K562 (cell line): ENCODE measurements at regions of chr1 and their contacts with region 1.

Region 1: DNA sequence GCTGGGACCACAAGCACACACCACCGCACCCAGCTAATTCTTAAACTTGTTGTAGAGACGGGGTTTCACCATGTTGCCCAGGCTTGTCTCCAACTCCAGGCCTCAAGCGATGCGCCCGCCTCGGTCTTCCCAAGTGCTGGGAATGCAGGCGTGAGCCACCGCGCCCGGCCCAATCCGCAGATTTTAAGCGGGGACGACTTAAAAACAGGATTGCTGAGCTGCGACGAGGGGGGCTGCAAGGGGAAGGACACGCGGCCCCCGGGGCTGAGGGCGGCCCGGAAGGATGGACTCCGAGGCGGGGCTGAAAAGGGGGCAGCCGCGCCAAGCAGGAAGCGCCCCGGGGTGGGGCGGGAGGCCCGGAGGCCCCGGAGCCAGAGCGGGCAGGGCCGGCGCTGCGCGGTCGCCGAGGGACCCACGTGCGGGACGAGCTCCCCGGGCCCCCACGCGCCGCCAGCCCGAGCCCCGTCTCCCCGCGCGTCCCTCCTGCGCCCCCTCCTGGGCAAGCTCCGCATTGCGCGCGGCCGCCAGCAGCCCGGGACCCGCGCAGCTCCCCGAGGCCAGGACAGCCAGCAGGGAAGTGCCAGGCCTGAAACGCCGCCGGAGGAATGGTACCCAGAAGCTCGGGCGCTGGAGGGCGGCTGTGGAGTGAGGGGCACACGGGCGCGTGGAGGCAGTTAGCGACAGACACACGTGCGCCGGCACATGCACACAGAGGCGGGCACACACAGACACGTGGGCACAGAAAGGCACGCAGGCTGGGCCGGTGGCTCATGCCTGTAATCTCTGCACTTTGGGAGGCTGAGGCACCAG is 5.5 kb upstream of the PRKCZ start:
- DNase-seq: peak; percentile 72 to 94 (median 90)
- ATAC-seq: peak; percentile 84
- H3K4me3 ChIP-seq: no peak overlapping the region
- H3K27ac ChIP-seq: no peak overlapping the region
- H3K4me1 ChIP-seq: peaks cover 0 to 49% of the 10 kb centered on the region in 2 experiments; a peak in 2 of 5 replicates
- H3K27me3 ChIP-seq: peaks cover 33 to 73% of the 10 kb centered on the region in 2 experiments; a peak in 4 of 5 replicates
- CTCF ChIP-seq: peak; percentile 71 to 94 (median 82)
- EP300 ChIP-seq: no peak
- POLR2A ChIP-seq: no peak
- RAD21 ChIP-seq: peak; percentile 65 to 86; a peak in 3 of 4 replicates

Region 2: DNA sequence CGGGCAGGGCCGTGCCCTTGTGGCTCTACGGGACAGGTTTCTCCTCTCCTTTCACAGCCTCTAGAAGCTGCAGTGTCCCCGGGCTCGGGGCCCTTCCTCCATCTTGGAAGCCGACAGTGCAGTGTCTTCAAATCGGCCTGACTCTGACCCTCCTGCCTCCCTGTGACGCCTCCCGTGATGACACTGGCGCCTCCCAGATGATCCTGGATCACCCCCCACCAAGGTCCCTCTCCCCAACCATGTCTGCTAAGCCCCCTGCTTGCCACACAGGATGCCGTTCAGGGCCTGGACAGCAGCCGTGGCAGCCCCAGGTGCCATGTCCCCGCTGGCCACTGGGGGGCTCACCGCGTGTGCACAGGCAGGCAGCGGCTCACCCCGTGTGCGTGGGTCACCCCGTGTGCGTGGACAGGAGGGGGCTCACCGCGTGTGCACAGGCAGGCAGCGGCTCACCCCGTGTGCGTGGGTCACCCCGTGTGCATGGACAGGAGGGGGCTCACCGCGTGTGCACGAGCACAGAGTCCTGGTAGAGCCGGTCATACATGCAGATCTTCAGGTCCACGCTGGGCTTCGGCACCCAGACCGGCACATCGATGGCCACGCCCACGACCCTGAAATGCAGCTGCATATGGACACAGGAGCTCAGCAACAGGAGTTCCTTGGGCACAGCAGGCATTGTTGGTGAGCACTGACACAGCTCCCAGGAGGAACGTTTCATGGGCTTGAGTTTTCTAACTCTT is 100.7 kb before region 1 on chr1:
- CTCF ChIA-PET with region 1: interaction called, 18 read pairs
- POLR2A ChIA-PET with region 1: interaction called, 3 read pairs
- in situ Hi-C with region 1: no loop called
- intact Hi-C with region 1: loop called (anchors 1 kb)
- DNase-seq: peak; percentile 74 to 84 (median 81)
- ATAC-seq: peak; percentile 99
- H3K4me3 ChIP-seq: no peak overlapping the region
- H3K27ac ChIP-seq: no peak overlapping the region
- H3K4me1 ChIP-seq: peaks cover 0 to 41% of the 10 kb centered on the region in 2 experiments; a peak in 2 of 5 replicates
- H3K27me3 ChIP-seq: peaks cover 58 to 90% of the 10 kb centered on the region in 2 experiments
- CTCF ChIP-seq: peak; percentile 77 to 97 (median 85)
- EP300 ChIP-seq: no peak
- POLR2A ChIP-seq: no peak
- RAD21 ChIP-seq: peak; percentile 48 to 73

Region 3: GRCh38 chr1:2163205-2163604 is 118.5 kb after region 1 on chr1:
- CTCF ChIA-PET with region 1: no interaction called
- POLR2A ChIA-PET with region 1: no interaction called
- in situ Hi-C with region 1: no loop called
- intact Hi-C with region 1: no loop called
- DNase-seq: no peak
- ATAC-seq: peak; percentile 27; the same call in 1 of the 3 replicates
- H3K4me3 ChIP-seq: no peak overlapping the region
- H3K27ac ChIP-seq: no peak overlapping the region
- H3K4me1 ChIP-seq: peaks cover 0 to 32% of the 10 kb centered on the region in 2 experiments; a peak in 2 of 5 replicates
- H3K27me3 ChIP-seq: peaks cover 70 to 95% of the 10 kb centered on the region in 2 experiments
- CTCF ChIP-seq: peak; percentile 22 to 47 (median 40); a peak in 4 of 6 replicates
- EP300 ChIP-seq: no peak
- POLR2A ChIP-seq: no peak
- RAD21 ChIP-seq: no peak; a peak in 1 of 4 replicates